Activated CD4-positive, alpha-beta memory T cell treated with anti-CD3 and anti-CD28 coated beads for 36 hours (primary cell): ENCODE measurements at regions of chr6 and their contacts with region 1.

Region 1: GRCh38 chr6:49531774-49532569 is 18.5 kb upstream of the C6orf141 start:
- DNase-seq: no peak
- H3K4me3 Mint-ChIP-seq: no peak overlapping the region
- H3K27ac Mint-ChIP-seq: no peak overlapping the region
- H3K4me1 Mint-ChIP-seq: peaks cover 4% of the 10 kb centered on the region
- H3K27me3 Mint-ChIP-seq: peaks cover 6% of the 10 kb centered on the region

Region 2: GRCh38 chr6:49519660-49520059 is 12.3 kb before region 1 on chr6:
- CTCF ChIA-PET with region 1: interaction called, 15 read pairs
- POLR2A ChIA-PET with region 1: no interaction called
- intact Hi-C with region 1: no loop called
- DNase-seq: no peak
- H3K4me3 Mint-ChIP-seq: no peak overlapping the region
- H3K27ac Mint-ChIP-seq: no peak overlapping the region
- H3K4me1 Mint-ChIP-seq: no peaks in the 10 kb centered on the region
- H3K27me3 Mint-ChIP-seq: peaks cover 3% of the 10 kb centered on the region

Region 3: DNA sequence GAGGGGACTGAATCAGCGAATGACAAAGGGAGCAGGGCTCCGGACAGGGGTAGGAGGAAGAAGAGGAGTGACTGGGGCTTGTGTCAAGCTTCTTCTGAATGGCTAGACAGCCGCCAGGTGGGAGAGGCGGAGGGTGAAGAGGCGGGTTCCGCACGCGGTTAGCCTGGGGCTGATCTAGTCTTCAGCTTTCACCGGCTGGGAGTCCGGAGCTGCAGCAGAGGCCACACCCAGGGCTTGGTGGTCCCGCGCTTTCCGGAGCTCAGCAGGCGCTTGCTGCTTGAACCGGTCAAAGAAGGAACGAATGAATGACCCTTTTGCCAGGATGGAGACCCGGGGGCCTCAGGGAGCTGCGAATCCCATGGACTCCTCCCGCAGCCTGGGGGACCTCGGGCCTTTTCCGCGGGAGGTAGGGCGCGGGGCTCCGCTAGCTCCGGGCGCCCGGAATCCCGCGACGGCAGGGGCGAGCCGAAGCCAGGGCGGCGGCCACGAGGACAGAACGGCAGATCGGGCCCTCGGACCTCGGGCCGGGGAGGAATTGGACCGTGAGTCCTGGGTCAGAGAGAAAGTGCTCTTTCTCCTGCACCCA is 18.6 kb after region 1 on chr6 and contains the start of gene C6orf141:
- CTCF ChIA-PET with region 1: interaction called, 27 read pairs
- POLR2A ChIA-PET with region 1: no interaction called
- intact Hi-C with region 1: no loop called
- DNase-seq: peak; percentile 49
- H3K4me3 Mint-ChIP-seq: peak within 1 kb of the TSS; percentile 62
- H3K27ac Mint-ChIP-seq: no peak within 1 kb of the TSS
- H3K4me1 Mint-ChIP-seq: peaks cover 23% of the 10 kb centered on the region
- H3K27me3 Mint-ChIP-seq: peaks cover 29% of the 10 kb centered on the region
- total RNA-seq, gene C6orf141: 0.86 to 1.0 TPM

Region 4: DNA sequence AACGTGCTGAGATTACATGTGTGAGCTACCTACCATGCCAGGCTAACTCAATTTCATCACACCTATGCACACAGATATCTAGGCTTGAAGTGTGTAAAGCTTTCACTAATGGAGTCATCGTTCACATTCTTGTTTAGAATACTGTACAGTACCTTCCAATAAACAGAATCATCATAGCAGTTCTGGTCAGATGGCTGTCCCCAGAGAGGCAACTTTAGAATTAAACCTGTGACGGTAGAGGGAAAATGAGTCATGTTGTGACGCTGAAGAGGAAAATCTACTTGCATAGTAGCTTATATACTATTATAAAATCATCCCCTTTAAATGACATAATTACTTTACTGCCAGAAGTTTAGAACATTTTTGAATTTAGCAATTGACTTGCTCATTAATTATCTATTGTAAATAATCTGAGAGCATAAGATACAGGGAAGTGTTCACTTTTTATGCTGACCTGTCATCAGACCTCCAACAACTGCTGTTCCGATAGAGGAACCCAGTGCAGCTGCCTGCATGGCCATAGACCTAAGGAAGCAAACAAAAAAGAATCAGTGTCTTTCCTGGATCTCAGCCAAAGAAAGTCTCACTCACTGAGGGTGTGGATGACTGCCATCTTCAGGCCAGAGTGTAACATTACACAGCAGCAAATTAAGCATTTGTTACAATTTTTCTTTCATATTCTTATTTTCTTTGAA is 74.9 kb after region 1 on chr6:
- CTCF ChIA-PET with region 1: interaction called, 53 read pairs
- POLR2A ChIA-PET with region 1: no interaction called
- intact Hi-C with region 1: loop called (anchors 1 kb)
- DNase-seq: no peak
- H3K4me3 Mint-ChIP-seq: no peak overlapping the region
- H3K27ac Mint-ChIP-seq: no peak overlapping the region
- H3K4me1 Mint-ChIP-seq: no peaks in the 10 kb centered on the region
- H3K27me3 Mint-ChIP-seq: peaks cover 6% of the 10 kb centered on the region

Region 5: GRCh38 chr6:49849213-49849907 is 317.4 kb after region 1 on chr6:
- CTCF ChIA-PET with region 1: interaction called, 34 read pairs
- POLR2A ChIA-PET with region 1: no interaction called
- intact Hi-C with region 1: loop called (anchors 1 kb)
- DNase-seq: no peak
- H3K4me3 Mint-ChIP-seq: no peak overlapping the region
- H3K27ac Mint-ChIP-seq: no peak overlapping the region
- H3K4me1 Mint-ChIP-seq: no peaks in the 10 kb centered on the region
- H3K27me3 Mint-ChIP-seq: no peaks in the 10 kb centered on the region